ENCODE measurements at regions of chr4 and their contacts with region 1.

Region 1: DNA sequence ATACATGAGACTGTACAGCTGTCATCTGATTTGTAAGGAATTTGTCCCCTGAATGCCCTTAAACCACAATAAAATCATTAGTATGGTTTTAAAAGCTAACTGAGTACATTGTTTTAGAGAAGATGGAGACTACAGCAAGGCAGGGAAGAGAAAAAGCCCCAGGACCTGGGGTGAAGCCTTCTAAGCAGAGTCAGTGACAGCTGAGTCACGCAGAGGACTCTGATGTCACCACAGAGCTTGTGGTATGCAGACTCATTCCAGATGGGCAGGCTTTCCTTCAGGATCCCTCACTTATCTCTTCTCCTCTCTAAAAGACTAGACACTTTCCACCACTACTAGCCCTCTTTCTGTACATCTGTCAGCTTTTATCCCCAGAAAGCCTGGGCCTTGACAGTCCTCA is 97.1 kb upstream of the ATOH1 start:
- DNase-seq: no peak

Region 2: GRCh38 chr4:93178290-93178689 is 553.2 kb before region 1 on chr4:
- intact Hi-C with region 1: no loop called
- DNase-seq: no peak

Region 3: DNA sequence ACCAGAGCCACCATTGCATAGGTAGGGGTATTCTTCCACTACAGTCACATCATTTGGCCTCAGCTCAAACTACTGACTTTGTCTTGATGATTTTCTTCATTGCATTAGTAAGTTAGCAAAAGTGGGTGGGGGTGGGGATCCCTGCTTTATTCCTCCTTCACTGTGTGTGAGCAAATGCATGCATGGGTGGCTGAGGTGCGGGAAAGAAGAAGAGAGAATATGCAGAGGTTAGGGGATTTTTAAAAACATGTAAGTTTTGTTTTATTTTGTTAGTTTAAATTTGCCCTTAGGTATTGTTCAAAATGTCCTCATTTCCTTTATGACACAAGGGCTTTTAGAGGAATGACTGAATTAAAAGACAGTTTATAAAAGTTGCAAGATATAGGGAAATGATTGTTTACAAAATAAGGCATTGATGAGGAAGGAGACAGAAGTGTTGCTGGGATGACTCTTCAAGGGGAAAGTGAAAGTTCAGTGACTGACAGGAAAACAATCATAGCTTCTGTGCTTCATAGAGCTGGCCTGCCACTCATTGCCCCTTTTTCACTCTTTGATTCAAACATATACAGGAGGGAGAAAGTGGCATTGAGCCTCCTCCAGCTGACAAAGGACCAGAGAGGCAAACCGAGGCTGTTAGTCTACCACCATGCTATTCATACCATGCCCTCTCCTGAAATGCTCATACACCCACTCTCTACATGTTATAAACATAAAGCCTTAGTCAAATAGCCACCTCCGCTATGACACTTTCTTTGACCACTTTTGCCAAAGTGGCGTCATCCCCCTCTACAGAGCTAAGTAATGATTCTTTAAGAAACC is 17.7 kb after region 1 on chr4:
- intact Hi-C with region 1: loop called in 1 of 2 experiments (anchors 2 kb)
- DNase-seq: no peak